ENCODE measurements at regions of chr1 and their contacts with region 1.

Region 1: GRCh38 chr1:45490626-45491486 is at the start of gene TESK2:
- DNase-seq: peak; percentile 99
- H3K4me3 ChIP-seq: peak within 1 kb of the TSS; percentile 82
- H3K27ac ChIP-seq: peak within 1 kb of the TSS; percentile 80
- H3K4me1 ChIP-seq: no peaks in the 10 kb centered on the region
- H3K27me3 ChIP-seq: no peaks in the 10 kb centered on the region
- CTCF ChIP-seq: peak; percentile 15
- total RNA-seq, gene TESK2: 11.3 to 15.3 TPM

Region 2: GRCh38 chr1:45011837-45012638 is 478.8 kb before region 1 on chr1 and contains the start of gene UROD:
- intact Hi-C with region 1: loop called (anchors 5 kb)
- DNase-seq: peak; percentile 93
- H3K4me3 ChIP-seq: peak within 1 kb of the TSS; percentile 90
- H3K27ac ChIP-seq: peak within 1 kb of the TSS; percentile 75
- H3K4me1 ChIP-seq: peaks cover 12% of the 10 kb centered on the region
- H3K27me3 ChIP-seq: no peaks in the 10 kb centered on the region
- CTCF ChIP-seq: no peak
- total RNA-seq, gene UROD: 41.7 to 43.5 TPM

Region 3: GRCh38 chr1:45326627-45327623 is 163.9 kb before region 1 on chr1 and contains the start of gene HPDL:
- intact Hi-C with region 1: no loop called
- DNase-seq: peak; percentile 84
- H3K4me3 ChIP-seq: peak within 1 kb of the TSS; percentile 66
- H3K27ac ChIP-seq: no peak within 1 kb of the TSS
- H3K4me1 ChIP-seq: peaks cover 13% of the 10 kb centered on the region
- H3K27me3 ChIP-seq: no peaks in the 10 kb centered on the region
- CTCF ChIP-seq: no peak
- total RNA-seq, gene HPDL: 4.3 to 29.3 TPM

Region 4: GRCh38 chr1:45359882-45360513 is 130.9 kb before region 1 on chr1:
- intact Hi-C with region 1: loop called (anchors 2 kb)
- DNase-seq: peak; percentile 78
- H3K4me3 ChIP-seq: no peak overlapping the region
- H3K27ac ChIP-seq: peak overlapping the region; percentile 54
- H3K4me1 ChIP-seq: no peaks in the 10 kb centered on the region
- H3K27me3 ChIP-seq: no peaks in the 10 kb centered on the region
- CTCF ChIP-seq: peak; percentile 57

Measured in colonic mucosa (tissue), 4 donors.